ENCODE measurements at regions of chr7 and their contacts with region 1.

Region 1: GRCh38 chr7:134016223-134016941 is 110.8 kb upstream of the LRGUK start:
- DNase-seq: peak; percentile 11
- H3K4me3 ChIP-seq: no peak overlapping the region
- H3K27ac ChIP-seq: no peak overlapping the region
- H3K4me1 ChIP-seq: no peaks in the 10 kb centered on the region
- H3K27me3 ChIP-seq: no peaks in the 10 kb centered on the region
- CTCF ChIP-seq: peak; percentile 67 to 78

Region 2: DNA sequence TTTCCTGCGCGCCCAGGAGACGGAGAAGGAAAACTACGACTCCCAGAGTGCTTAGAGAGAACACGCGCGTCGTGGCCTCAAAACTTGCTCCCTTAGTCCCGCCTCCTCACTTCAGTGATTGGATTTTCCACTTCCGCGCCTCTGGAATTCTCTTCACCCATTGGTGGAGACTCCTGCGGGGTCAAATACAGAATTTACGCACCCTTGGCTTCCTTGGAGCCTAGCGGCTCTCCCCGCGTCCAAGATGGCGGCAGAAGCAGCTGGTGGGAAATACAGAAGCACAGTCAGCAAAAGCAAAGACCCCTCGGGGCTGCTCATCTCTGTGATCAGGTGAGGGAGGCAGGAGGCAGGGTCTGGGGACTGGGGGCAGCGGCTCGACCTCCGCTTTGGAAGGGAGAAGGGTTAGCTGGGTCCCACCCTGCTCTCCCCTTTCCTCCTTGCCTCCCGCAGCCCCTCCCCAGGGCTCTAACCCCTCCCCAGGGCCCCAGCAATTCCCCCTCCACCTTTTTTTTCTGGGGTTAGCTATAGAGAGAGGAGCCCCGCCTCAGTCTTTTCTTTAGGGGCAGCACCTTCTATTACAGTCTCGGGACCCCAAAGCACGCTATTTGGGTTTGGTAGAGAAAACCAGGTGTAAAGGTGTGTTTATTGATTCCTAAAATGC is 763.4 kb before region 1 on chr7 and contains the start of gene EXOC4:
- CTCF ChIA-PET with region 1: no interaction called
- dilution Hi-C with region 1: no loop called
- in situ Hi-C with region 1: no loop called
- intact Hi-C with region 1: loop called (anchors 10 kb)
- DNase-seq: peak; percentile 96
- H3K4me3 ChIP-seq: peak within 1 kb of the TSS; percentile 88 to 97 (median 91)
- H3K27ac ChIP-seq: peak within 1 kb of the TSS; percentile 69
- H3K4me1 ChIP-seq: peaks cover 4% of the 10 kb centered on the region
- H3K27me3 ChIP-seq: no peaks in the 10 kb centered on the region
- CTCF ChIP-seq: no peak
- total RNA-seq, gene EXOC4: 90.4 to 91.7 TPM

Region 3: DNA sequence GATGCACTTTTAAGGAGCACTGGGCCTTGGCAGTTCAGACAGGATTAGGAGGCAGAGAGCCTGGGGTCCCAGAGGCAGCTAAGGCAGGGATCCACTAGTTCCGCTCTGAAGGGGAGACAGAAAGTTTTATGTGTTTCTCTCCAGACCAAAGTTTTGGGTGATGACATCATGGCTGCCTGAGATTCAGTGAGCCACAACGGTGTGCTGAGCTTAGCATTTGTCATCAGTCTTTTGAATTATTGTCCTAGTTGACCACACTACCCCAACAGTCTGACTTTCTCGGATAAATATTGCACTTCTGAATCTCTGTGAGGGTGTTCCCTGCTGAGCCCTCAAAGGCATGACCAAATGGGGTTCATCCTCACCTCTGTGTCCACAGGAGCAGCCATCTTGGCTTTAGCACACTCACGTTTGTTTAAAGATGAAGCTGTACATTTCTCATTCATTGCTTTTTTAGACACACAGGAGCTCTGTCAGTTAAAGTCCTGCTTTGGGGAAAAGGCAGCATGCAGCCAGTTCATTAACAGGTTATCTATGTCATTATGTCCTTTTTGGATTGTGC is 187.0 kb before region 1 on chr7:
- CTCF ChIA-PET with region 1: interaction called, 11 read pairs
- dilution Hi-C with region 1: no loop called
- in situ Hi-C with region 1: no loop called
- intact Hi-C with region 1: no loop called
- DNase-seq: peak; percentile 20
- H3K4me3 ChIP-seq: no peak overlapping the region
- H3K27ac ChIP-seq: no peak overlapping the region
- H3K4me1 ChIP-seq: no peaks in the 10 kb centered on the region
- H3K27me3 ChIP-seq: no peaks in the 10 kb centered on the region
- CTCF ChIP-seq: no peak

Region 4: DNA sequence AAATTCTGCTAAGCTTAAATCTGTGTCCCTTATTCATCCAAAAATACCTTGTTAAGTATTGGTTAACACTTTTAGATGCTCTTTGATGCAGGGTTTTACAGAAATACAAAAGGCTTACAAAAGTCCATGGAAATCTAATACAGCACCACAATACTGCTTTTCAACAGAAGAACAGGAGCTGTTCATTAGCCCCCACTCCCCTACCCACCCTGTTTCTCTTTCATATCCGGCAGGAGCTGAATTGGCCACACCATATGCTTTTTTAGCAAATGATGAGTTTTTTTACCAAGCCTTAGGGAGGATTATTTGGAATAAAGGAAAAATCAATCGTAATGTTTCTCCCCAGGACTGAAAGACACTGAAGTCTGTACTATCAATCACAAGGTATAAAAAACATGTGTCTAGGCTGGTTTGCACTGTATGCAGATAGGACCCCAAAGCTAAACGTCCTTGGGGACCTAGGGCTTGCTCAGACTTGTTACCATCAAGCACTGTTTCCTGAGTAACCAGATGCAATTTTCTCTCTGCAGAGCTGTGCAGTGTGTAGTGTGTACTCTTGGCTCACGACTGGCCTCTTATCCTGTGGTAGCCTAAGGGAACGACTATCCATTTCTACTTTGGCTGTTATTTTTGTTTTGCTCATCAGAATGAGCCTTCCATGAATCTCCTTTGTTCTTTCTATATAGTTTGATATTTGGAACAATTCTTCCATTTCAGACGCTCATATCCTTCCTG is 32.5 kb before region 1 on chr7:
- CTCF ChIA-PET with region 1: no interaction called
- dilution Hi-C with region 1: no loop called
- in situ Hi-C with region 1: no loop called
- intact Hi-C with region 1: no loop called
- DNase-seq: peak; percentile 32
- H3K4me3 ChIP-seq: no peak overlapping the region
- H3K27ac ChIP-seq: no peak overlapping the region
- H3K4me1 ChIP-seq: peaks cover 16% of the 10 kb centered on the region
- H3K27me3 ChIP-seq: no peaks in the 10 kb centered on the region
- CTCF ChIP-seq: peak in 1 of 2 donors; percentile 17

Region 5: DNA sequence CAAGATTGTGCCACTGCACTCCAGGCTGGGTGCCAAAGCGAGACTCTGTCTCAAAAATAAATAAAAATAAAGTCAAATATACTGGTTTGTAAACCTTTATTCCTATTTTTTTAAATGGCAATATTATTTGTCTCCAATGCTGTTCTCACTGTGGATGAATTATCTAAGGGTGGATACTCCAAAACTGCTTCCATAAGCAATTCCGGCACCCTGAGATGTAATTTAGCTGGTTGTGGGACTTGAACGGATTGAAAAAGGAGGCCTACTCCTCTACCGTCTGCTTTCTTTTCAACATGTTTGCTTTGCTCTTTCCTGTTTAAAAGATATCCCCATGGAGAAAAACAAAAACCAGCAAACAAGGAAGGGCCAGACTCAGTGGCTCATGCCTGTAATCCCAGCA is 245.9 kb after region 1 on chr7:
- CTCF ChIA-PET with region 1: no interaction called
- dilution Hi-C with region 1: no loop called
- in situ Hi-C with region 1: no loop called
- intact Hi-C with region 1: no loop called
- DNase-seq: no peak
- H3K4me3 ChIP-seq: no peak overlapping the region
- H3K27ac ChIP-seq: no peak overlapping the region
- H3K4me1 ChIP-seq: no peaks in the 10 kb centered on the region
- H3K27me3 ChIP-seq: no peaks in the 10 kb centered on the region
- CTCF ChIP-seq: no peak